Dendritic cell treated with granulocyte-macrophage colony-stimulating factor and Interleukin-4, amounts not matched to agents 40 ng/mL and 50 ng/mL, for 4 days (primary cell): ENCODE measurements at regions of chr1 and their contacts with region 1.

Region 1: GRCh38 chr1:111507411-111508201 is 4.2 kb upstream of the ADORA3 start:
- H3K4me3 Mint-ChIP-seq: peak overlapping the region; percentile 59
- H3K27ac Mint-ChIP-seq: no peak overlapping the region
- H3K4me1 Mint-ChIP-seq: peaks cover 41% of the 10 kb centered on the region
- H3K27me3 Mint-ChIP-seq: no peaks in the 10 kb centered on the region

Region 2: DNA sequence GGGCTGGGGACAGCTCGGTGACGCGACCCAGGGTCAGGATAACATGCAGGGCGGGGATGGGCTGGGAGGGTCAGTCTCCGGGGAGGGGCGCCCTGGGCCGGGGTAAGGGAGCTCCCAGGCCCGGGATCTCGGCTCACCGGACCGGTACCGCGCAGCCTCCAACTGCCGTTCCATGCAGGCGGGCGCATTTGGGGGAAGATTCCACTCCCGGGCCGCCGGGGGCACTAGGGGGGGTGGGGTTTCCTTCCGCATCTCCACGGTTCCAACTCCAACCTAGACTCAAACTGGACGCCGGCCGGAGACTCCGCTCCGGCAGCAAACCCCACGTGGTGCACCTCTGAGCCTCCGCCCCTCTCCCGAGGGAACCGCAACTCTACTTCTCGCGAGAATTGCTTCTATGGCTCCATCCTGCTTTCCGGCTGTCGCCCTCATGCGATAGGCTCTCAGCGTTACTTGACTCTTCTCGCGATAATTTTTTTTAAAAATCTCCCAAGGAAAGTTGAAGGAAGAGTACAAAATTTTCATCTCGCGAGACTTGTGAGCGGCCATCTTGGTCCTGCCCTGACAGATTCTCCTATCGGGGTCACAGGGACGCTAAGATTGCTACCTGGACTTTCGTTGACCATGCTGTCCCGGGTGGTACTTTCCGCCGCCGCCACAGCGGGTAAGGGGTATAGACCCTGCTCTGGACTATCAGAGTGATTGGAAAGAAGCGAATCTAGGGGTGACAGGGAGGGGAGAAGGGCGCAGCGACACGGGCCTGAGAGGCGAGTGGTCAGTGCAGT is 58.5 kb before region 1 on chr1 and contains the starts of genes ATP5PB and WDR77:
- intact Hi-C with region 1: loop called (anchors 2 kb)
- H3K4me3 Mint-ChIP-seq: peak within 1 kb of the TSS; percentile 100
- H3K27ac Mint-ChIP-seq: peak within 1 kb of the TSS; percentile 98
- H3K4me1 Mint-ChIP-seq: peaks cover 48% of the 10 kb centered on the region
- H3K27me3 Mint-ChIP-seq: no peaks in the 10 kb centered on the region

Region 3: GRCh38 chr1:111471012-111471411 is 36.6 kb before region 1 on chr1:
- intact Hi-C with region 1: loop called (anchors 5 kb)
- H3K4me3 Mint-ChIP-seq: no peak overlapping the region
- H3K27ac Mint-ChIP-seq: no peak overlapping the region
- H3K4me1 Mint-ChIP-seq: peaks cover 18% of the 10 kb centered on the region
- H3K27me3 Mint-ChIP-seq: no peaks in the 10 kb centered on the region

Region 4: DNA sequence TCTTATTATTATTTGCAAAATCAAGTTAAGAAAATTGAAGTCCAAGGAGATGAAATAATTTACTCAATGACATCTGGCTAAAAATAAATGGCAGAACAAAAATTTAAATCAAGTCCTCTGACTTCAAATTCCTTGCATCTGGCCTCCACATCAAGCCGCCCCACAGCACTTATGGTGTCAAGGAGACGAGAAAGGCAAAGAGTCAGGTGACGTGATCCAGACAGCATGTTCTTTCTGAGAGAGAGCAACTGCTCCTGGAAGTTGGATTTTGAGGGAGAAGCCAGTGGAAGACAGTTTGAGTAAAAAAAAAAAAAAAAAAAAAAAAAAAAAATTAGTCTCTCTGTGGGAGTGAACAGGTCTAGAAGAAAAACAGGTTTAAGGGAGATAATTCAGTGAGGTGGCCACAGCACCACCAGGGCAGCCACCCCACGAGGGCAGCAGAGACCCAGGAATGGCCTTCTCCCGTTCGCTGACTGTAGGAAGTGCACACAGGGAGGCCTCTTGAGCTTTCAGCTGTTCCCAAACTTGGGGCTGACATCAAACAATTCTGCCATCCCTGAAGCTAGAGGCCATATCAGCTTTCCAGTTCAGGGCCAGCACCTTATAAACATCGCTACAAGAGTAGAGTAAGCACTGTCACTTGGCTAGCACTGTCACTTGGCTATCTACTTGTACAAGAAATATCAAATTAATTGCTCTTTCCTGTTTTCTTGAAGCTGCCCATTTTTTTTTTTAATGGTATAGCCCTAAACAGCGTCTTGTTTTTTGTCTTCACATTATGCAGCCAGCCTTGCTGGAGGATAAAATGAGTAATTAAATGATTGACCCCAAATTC is 26.0 kb before region 1 on chr1:
- intact Hi-C with region 1: loop called (anchors 2 kb)
- H3K4me3 Mint-ChIP-seq: no peak overlapping the region
- H3K27ac Mint-ChIP-seq: peak overlapping the region; percentile 24
- H3K4me1 Mint-ChIP-seq: peaks cover 86% of the 10 kb centered on the region
- H3K27me3 Mint-ChIP-seq: no peaks in the 10 kb centered on the region

Region 5: GRCh38 chr1:111619635-111620440 is 112.2 kb after region 1 on chr1 and contains the start of gene RAP1A:
- intact Hi-C with region 1: loop called (anchors 2 kb)
- H3K4me3 Mint-ChIP-seq: peak within 1 kb of the TSS; percentile 87
- H3K27ac Mint-ChIP-seq: peak within 1 kb of the TSS; percentile 92
- H3K4me1 Mint-ChIP-seq: peaks cover 76% of the 10 kb centered on the region
- H3K27me3 Mint-ChIP-seq: no peaks in the 10 kb centered on the region

Region 6: DNA sequence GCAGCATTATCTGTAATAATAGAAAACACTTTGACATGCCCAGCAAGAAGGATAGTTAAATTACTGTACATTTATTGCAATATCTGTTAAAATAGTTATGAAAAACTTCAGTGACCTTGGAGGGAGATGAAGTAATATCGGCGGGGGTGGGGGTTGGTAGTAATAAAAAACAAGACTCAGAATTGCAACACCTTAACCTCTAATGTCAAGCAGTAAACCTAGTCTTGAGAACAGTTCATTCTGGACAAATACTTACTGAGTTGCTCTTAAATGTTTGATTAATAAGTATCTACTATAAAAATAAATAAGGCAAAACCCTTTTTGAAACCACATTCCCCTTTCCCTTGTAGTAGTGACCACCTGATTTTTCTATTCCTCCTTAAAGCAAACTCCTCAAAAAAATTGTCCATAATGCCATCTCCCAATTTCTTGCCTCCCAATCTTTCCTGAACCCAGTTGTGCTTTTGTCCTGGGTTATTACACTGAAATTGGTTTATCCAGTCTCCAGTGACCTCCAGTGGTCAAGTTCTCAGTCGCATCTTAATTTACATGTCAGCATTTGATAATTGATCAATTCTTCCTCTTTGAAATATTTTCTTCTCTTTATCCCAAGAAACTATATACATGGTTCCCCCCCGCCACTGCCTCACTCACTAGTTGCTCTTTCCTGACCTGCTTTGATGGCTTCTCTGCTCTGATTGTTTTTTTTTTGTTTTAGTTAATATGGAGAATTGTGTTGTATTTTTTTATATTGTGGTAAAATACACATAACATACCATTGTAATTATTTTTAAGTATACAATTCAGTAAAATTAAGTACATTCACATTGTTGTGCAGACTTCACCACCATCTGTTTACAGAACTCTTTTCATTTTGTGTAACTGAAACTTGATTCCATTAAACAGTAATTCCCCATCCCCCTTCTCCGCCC is 148.7 kb after region 1 on chr1:
- intact Hi-C with region 1: loop called (anchors 1 kb)
- H3K4me3 Mint-ChIP-seq: no peak overlapping the region
- H3K27ac Mint-ChIP-seq: peak overlapping the region; percentile 10
- H3K4me1 Mint-ChIP-seq: peaks cover 51% of the 10 kb centered on the region
- H3K27me3 Mint-ChIP-seq: no peaks in the 10 kb centered on the region

Region 7: GRCh38 chr1:111679541-111679940 is 171.9 kb after region 1 on chr1:
- intact Hi-C with region 1: no loop called
- H3K4me3 Mint-ChIP-seq: no peak overlapping the region
- H3K27ac Mint-ChIP-seq: no peak overlapping the region
- H3K4me1 Mint-ChIP-seq: peaks cover 14% of the 10 kb centered on the region
- H3K27me3 Mint-ChIP-seq: no peaks in the 10 kb centered on the region